ENCODE measurements at regions of chr13 and their contacts with region 1.

Region 1: GRCh38 chr13:44237276-44237767 is 136.3 kb upstream of the SERP2 start:
- DNase-seq: peak; percentile 85 to 95 (median 89)
- H3K4me3 ChIP-seq: no peak overlapping the region
- H3K4me3 Mint-ChIP-seq: peak overlapping the region in 1 of 2 donors; percentile 80
- H3K27ac ChIP-seq: peak overlapping the region; percentile 15 to 81
- H3K27ac Mint-ChIP-seq: peak overlapping the region; percentile 58 to 93 (median 89)
- H3K4me1 ChIP-seq: peaks cover 16 to 20% of the 10 kb centered on the region in 2 donors
- H3K4me1 Mint-ChIP-seq: peaks cover 30% of the 10 kb centered on the region
- H3K27me3 ChIP-seq: no peaks in the 10 kb centered on the region
- H3K27me3 Mint-ChIP-seq: peaks cover 4 to 13% (median 10%) of the 10 kb centered on the region in 3 donors
- CTCF ChIP-seq: no peak

Region 2: GRCh38 chr13:44312898-44313551 is 75.7 kb after region 1 on chr13:
- intact Hi-C with region 1: loop called in 1 of 2 experiments (anchors 5 kb)
- DNase-seq: peak; percentile 15 to 81 (median 38)
- H3K4me3 ChIP-seq: no peak overlapping the region
- H3K4me3 Mint-ChIP-seq: peak overlapping the region in 1 of 2 donors; percentile 36
- H3K27ac ChIP-seq: no peak overlapping the region
- H3K27ac Mint-ChIP-seq: peak overlapping the region in 3 of 7 donors; percentile 42 to 79 (median 57)
- H3K4me1 ChIP-seq: no peaks in the 10 kb centered on the region
- H3K4me1 Mint-ChIP-seq: peaks cover 6% of the 10 kb centered on the region
- H3K27me3 ChIP-seq: peaks cover 0 to 3% of the 10 kb centered on the region in 2 donors
- H3K27me3 Mint-ChIP-seq: peaks cover 0 to 15% (median 7%) of the 10 kb centered on the region in 3 donors
- CTCF ChIP-seq: no peak

Measured in CD14-positive monocyte (primary cell).